Activated CD4-positive, alpha-beta T cell treated with anti-CD3 and anti-CD28 coated beads, Interleukin-2, amount 10 ng/mL, durations not matched to agents 24 days and 14 days (primary cell): ENCODE measurements at regions of chr3 and their contacts with region 1.

Region 1: GRCh38 chr3:188154014-188154808 is at the start of gene LPP:
- DNase-seq: peak; percentile 97
- H3K4me3 Mint-ChIP-seq: peak within 1 kb of the TSS; percentile 86
- H3K27ac Mint-ChIP-seq: peak within 1 kb of the TSS; percentile 90
- H3K4me1 Mint-ChIP-seq: peaks cover 58% of the 10 kb centered on the region
- H3K27me3 Mint-ChIP-seq: no peaks in the 10 kb centered on the region
- total RNA-seq, gene LPP: 39.5 and 41.4 TPM in 2 replicates

Region 2: GRCh38 chr3:187994221-187995042 is 159.8 kb before region 1 on chr3:
- intact Hi-C with region 1: loop called (anchors 5 kb)
- DNase-seq: peak; percentile 75
- H3K4me3 Mint-ChIP-seq: peak overlapping the region; percentile 47
- H3K27ac Mint-ChIP-seq: peak overlapping the region; percentile 76
- H3K4me1 Mint-ChIP-seq: peaks cover 71% of the 10 kb centered on the region
- H3K27me3 Mint-ChIP-seq: no peaks in the 10 kb centered on the region

Region 3: GRCh38 chr3:188170461-188171459 is 16.5 kb after region 1 on chr3:
- intact Hi-C with region 1: loop called (anchors 1 kb)
- DNase-seq: peak; percentile 79
- H3K4me3 Mint-ChIP-seq: peak overlapping the region; percentile 4
- H3K27ac Mint-ChIP-seq: peak overlapping the region; percentile 85
- H3K4me1 Mint-ChIP-seq: peaks cover 39% of the 10 kb centered on the region
- H3K27me3 Mint-ChIP-seq: no peaks in the 10 kb centered on the region

Region 4: GRCh38 chr3:188257384-188258026 is 103.3 kb after region 1 on chr3:
- intact Hi-C with region 1: loop called (anchors 1 kb)
- DNase-seq: no peak
- H3K4me3 Mint-ChIP-seq: no peak overlapping the region
- H3K27ac Mint-ChIP-seq: peak overlapping the region; percentile 85
- H3K4me1 Mint-ChIP-seq: peaks cover 47% of the 10 kb centered on the region
- H3K27me3 Mint-ChIP-seq: no peaks in the 10 kb centered on the region

Region 5: DNA sequence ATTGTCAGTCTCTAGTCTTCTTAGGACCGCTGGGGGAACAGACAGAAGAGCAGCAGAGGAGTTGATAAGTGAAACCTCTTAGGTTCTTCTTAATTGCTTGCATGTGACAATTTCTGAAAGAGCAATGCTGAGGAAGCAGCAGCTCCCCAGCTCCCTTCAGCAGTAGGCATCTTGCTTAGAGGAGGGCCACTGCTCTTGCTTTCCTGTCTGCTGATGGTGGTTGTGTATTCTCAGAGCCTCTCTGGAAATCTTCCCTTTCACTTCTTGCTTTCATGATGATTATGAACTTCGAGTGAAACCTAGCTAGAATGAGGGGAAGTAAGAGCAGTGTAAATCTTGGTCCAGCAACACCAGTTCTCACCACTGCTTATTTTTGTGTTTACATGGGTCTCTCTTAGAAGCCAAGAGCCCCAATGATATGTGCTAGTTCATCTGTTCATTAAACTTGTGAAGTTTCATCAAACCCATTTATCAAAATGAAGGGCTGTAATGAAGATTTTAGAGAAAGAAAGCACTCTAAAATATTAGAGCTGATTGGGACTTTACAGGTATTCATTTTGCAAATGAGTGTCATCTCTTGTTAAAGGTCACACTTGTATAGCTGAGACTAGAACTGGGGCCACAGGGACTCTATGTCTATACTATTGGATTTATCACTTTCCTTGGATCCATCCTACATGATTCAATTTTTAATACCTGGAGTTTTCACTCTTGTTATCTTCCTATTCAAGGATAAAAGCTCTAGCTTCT is 246.5 kb after region 1 on chr3:
- intact Hi-C with region 1: loop called (anchors 5 kb)
- DNase-seq: peak; percentile 81
- H3K4me3 Mint-ChIP-seq: peak overlapping the region; percentile 18
- H3K27ac Mint-ChIP-seq: peak overlapping the region; percentile 68
- H3K4me1 Mint-ChIP-seq: peaks cover 62% of the 10 kb centered on the region
- H3K27me3 Mint-ChIP-seq: no peaks in the 10 kb centered on the region

Region 6: DNA sequence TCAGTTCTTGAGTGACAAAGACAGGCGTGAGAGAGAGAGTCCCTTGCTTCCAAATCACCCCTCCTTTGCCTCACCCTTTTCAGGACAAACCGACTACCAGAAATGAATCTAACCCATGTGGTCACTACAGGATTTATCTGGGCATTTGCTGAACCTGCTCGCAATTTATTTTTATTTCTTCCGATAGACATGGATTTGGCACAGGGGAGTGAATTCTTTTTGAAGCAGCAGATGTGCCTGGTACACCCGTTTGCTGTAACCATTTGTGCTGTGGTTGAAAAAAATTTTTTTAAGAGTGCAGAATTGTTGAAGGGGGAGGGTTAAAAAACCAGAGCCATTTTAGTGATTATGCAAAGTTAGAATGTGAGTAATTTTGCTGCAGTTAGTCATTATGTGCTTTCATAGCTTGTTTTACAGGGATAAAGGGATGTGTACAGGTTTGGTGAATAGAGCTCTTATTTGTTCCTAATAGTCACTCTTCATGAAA is 441.7 kb after region 1 on chr3:
- intact Hi-C with region 1: no loop called
- DNase-seq: no peak
- H3K4me3 Mint-ChIP-seq: no peak overlapping the region
- H3K27ac Mint-ChIP-seq: no peak overlapping the region
- H3K4me1 Mint-ChIP-seq: peaks cover 4% of the 10 kb centered on the region
- H3K27me3 Mint-ChIP-seq: no peaks in the 10 kb centered on the region

Region 7: DNA sequence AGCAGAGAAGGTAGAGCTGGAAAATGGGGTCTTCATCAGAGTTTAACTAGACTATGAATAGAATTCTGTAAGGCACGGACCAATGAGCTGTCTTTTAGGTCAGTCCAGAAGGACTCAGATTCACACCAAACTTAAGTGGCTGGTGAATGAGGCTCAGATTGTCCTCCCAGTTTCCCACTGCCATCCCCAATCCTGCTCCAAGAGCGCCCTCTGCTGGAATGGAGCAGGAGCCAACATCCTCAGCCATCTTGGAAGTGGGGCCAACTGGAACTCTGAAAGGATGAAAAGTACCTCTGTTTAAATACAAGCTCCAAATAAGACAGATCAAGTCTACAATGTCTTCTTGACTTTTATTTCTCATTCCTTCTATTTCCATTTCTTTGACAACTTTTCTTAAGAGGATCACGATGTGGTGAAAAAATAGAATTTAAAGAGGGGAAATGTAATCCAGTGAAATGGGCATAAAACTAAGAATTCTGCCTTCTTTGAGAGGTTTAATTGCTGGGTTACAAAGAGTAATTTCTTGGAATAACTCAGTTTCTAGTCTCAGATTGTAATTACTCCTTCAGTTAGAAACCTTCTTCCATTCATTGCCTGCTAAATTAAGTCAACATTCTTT is 800.5 kb after region 1 on chr3:
- intact Hi-C with region 1: loop called (anchors 10 kb)
- DNase-seq: peak; percentile 94
- H3K4me3 Mint-ChIP-seq: no peak overlapping the region
- H3K27ac Mint-ChIP-seq: peak overlapping the region; percentile 10
- H3K4me1 Mint-ChIP-seq: peaks cover 27% of the 10 kb centered on the region
- H3K27me3 Mint-ChIP-seq: peaks cover 6% of the 10 kb centered on the region